ENCODE measurements at regions of chr5 and their contacts with region 1.

Region 1: DNA sequence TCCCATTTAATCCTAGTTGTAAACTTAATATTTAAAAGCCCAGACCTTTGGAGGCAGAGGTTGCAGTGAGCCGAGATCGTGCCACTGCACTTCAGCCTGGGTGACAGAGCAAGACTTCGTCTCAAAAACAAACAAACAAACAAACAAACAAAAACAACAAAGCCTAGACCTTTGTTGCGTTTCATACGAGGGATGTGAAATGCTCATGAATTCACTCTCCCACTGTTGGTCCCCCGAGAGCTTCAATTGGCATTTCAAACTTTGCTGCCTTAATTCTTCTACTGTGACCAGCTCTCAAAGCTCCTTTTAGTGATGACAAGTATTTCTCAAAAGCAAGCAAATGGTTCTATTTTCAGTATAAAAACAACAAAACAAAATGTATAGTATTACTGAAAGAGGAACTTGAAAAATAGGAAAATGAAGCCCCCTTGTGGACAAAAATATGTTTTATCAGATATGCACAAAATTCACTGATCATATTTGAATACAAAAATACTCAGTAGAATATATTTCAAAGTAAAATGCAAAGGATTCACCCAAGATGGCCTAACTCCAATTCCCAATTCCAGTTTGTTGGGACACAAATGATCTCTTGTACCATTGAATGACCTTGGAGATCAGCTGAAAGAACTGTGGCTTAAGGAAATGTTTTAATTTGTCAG is 140.4 kb downstream of the ESM1 start:
- DNase-seq: no peak
- H3K4me3 ChIP-seq: peak overlapping the region in 1 of 3 donors; percentile 20
- H3K27ac ChIP-seq: no peak overlapping the region
- H3K4me1 ChIP-seq: no peaks in the 10 kb centered on the region
- H3K27me3 ChIP-seq: no peaks in the 10 kb centered on the region
- CTCF ChIP-seq: peak; percentile 63 to 70 (median 65)
- POLR2A ChIP-seq: no peak

Region 2: GRCh38 chr5:54517174-54518092 is 327.6 kb before region 1 on chr5 and contains the start of gene SNX18:
- intact Hi-C with region 1: loop called (anchors 5 kb)
- DNase-seq: peak; percentile 87
- H3K4me3 ChIP-seq: peak within 1 kb of the TSS; percentile 62 to 95 (median 85)
- H3K27ac ChIP-seq: peak within 1 kb of the TSS; percentile 95 to 97
- H3K4me1 ChIP-seq: peaks cover 6 to 8% of the 10 kb centered on the region in 2 donors
- H3K27me3 ChIP-seq: no peaks in the 10 kb centered on the region
- CTCF ChIP-seq: peak; percentile 93 to 99 (median 94)
- POLR2A ChIP-seq: no peak
- total RNA-seq, gene SNX18: 29.2 to 37.3 (median 33.1) TPM

Region 3: GRCh38 chr5:55636683-55637082 is 791.6 kb after region 1 on chr5:
- intact Hi-C with region 1: no loop called
- DNase-seq: peak in 1 of 2 donors; percentile 37
- H3K4me3 ChIP-seq: no peak overlapping the region
- H3K27ac ChIP-seq: peak overlapping the region; percentile 49 to 78
- H3K4me1 ChIP-seq: peaks cover 0 to 7% of the 10 kb centered on the region in 2 donors
- H3K27me3 ChIP-seq: no peaks in the 10 kb centered on the region
- CTCF ChIP-seq: no peak
- POLR2A ChIP-seq: no peak

Region 4: DNA sequence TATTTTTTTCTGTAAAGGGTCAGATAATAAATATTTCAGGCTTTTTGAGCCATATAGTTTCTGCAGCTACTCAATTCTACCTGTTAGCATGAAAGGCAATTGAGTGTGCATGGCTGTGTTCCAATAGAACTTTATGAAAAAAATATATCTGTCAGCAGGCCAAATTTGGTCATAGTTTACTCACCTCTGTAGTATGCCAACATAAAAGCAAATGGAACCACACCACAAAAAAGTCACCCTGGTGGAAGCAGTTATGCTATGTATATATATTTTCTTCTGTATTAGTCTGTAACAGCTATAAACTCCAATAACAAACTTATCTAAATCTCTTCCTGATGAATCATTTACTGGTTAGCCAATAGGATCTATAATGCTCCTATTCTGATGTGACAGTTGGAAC is 863.7 kb after region 1 on chr5:
- intact Hi-C with region 1: no loop called
- DNase-seq: no peak
- H3K4me3 ChIP-seq: no peak overlapping the region
- H3K27ac ChIP-seq: no peak overlapping the region
- H3K4me1 ChIP-seq: no peaks in the 10 kb centered on the region
- H3K27me3 ChIP-seq: no peaks in the 10 kb centered on the region
- CTCF ChIP-seq: no peak
- POLR2A ChIP-seq: no peak